Breast epithelium (tissue), 4 donors: ENCODE measurements at regions of chr6 and their contacts with region 1.

Region 1: DNA sequence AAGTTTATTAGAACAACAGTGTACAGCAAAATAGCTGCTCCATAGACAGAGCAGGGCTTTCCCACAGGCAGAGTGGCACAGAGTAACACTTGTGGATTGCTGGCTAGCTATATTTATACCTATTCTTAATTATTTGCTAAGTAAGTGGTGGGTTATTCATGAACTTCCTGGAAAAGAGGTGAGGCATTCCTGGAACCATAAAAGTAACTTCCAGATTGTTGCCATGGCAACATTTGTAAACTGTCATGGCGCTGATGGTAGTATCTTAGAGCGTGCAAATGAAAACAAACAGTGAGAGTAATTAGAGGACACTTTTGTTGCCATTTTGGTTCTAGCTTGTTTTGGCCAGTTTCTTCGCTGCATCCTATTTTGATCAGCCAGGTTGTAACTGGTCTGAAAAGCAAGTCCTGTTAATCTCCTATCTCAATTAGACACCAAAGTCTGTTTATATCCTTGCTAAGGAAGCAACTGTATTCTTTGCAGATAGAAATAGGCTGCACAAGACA is 23.9 kb downstream of the DEFB114 start:
- DNase-seq: no peak
- H3K4me3 ChIP-seq: no peak overlapping the region
- H3K27ac ChIP-seq: no peak overlapping the region
- H3K4me1 ChIP-seq: no peaks in the 10 kb centered on the region
- H3K27me3 ChIP-seq: no peaks in the 10 kb centered on the region
- CTCF ChIP-seq: no peak
- POLR2A ChIP-seq: no peak

Region 2: DNA sequence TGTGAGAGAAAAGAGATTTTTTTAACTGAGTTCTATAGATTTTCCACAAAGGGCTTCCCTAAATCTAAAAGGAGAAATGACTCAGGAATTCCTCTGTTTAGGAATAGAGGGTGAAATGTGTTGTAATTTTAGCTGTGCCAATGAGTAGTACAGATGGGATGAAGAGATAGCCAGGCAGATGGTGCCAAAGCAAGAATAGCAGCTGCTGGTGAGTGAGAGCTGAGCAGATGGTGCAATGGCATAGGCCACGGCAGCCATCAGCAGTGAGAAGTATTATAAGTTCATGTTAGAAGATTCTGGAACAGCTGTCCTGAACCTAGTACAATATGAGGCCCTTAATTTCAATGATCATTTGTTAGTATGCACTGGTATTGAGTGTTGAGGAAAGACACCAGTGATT is 33.5 kb before region 1 on chr6:
- intact Hi-C with region 1: no loop called
- DNase-seq: no peak
- H3K4me3 ChIP-seq: no peak overlapping the region
- H3K27ac ChIP-seq: no peak overlapping the region
- H3K4me1 ChIP-seq: no peaks in the 10 kb centered on the region
- H3K27me3 ChIP-seq: no peaks in the 10 kb centered on the region
- CTCF ChIP-seq: no peak
- POLR2A ChIP-seq: no peak

Region 3: GRCh38 chr6:51936531-51936930 is 1996.5 kb after region 1 on chr6:
- intact Hi-C with region 1: loop called (anchors 5 kb)
- DNase-seq: no peak
- H3K4me3 ChIP-seq: no peak overlapping the region
- H3K27ac ChIP-seq: no peak overlapping the region
- H3K4me1 ChIP-seq: no peaks in the 10 kb centered on the region
- H3K27me3 ChIP-seq: no peaks in the 10 kb centered on the region
- CTCF ChIP-seq: no peak
- POLR2A ChIP-seq: no peak